ENCODE measurements at regions of chr1 and their contacts with region 1.

Region 1: GRCh38 chr1:208988811-208989222 is 594.7 kb upstream of the CAMK1G start:
- DNase-seq: peak; percentile 15
- H3K4me3 Mint-ChIP-seq: peak overlapping the region; percentile 69
- H3K27ac Mint-ChIP-seq: peak overlapping the region; percentile 64
- H3K4me1 Mint-ChIP-seq: peaks cover 21% of the 10 kb centered on the region
- H3K27me3 Mint-ChIP-seq: peaks cover 10% of the 10 kb centered on the region

Region 2: DNA sequence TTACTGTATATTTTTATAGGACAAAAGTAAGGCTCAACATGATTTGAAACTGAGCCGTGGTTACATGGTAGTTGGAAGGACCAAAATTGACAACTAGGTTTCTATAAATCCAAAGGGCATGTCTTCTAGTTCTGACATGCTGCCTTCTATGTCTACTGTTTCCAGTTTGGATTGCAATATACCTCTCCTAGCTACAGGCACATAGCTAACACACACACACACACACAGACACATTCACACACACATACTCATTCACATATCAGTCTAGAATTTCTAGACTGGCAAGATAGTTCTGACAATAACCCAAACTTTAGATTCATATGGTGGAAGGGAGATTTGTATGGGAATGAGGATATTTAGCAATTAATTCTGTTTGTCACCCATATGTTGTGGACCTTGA is 49.9 kb after region 1 on chr1:
- CTCF ChIA-PET with region 1: no interaction called
- intact Hi-C with region 1: loop called (anchors 2 kb)
- DNase-seq: no peak
- H3K4me3 Mint-ChIP-seq: no peak overlapping the region
- H3K27ac Mint-ChIP-seq: no peak overlapping the region
- H3K4me1 Mint-ChIP-seq: peaks cover 5% of the 10 kb centered on the region
- H3K27me3 Mint-ChIP-seq: peaks cover 9% of the 10 kb centered on the region